Naive thymus-derived CD8-positive, alpha-beta T cell (primary cell): ENCODE measurements at regions of chr10 and their contacts with region 1.

Region 1: GRCh38 chr10:92240289-92241157 is 50.4 kb downstream of the CPEB3 start:
- DNase-seq: peak in 6 of 10 donors; percentile 23 to 44 (median 38)
- ATAC-seq: peak; percentile 30 to 41
- H3K4me3 Mint-ChIP-seq: peak overlapping the region; percentile 88 to 96 (median 92)
- H3K27ac Mint-ChIP-seq: peak overlapping the region; percentile 42 to 91 (median 84)
- H3K4me1 Mint-ChIP-seq: peaks cover 21 to 50% (median 34%) of the 10 kb centered on the region in 4 donors
- H3K27me3 Mint-ChIP-seq: no peaks in the 10 kb centered on the region

Region 2: DNA sequence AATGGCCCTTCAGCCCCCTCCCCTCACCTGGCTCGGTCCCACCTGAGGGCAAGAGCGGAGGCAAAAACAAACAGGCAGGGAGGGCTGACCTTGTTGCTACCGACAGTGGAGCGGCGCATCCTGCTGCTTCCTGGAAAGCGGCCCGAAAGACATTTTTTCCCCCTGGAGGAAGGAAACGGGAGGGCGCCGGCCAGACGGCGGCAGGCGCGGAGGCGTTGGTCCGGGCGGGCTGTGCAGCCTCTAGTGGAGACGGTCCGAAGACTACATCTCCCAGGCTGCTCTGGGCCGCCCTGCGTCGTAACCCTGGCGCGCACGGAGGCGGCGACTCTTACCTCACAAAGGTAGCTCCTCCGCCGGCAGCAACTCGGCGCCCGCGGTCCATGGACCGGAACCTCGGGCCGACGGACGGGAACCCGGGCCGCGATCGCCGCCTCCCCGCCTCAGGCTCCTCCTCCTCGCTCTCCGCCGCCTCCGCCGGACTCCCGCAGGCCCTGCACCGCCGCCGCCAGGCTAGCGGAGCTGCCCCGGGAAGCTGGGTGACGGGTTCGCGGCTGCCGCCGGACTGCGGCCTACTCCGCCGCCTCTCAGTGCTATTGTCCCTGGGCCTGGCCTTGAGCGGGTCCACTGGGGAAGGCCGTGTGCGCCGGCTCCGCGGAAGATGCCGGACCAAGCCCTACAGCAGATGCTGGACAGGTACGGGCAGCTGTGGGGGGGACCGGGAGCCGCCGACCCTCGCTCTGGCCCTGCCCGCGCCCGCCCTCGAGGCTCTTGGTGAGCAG is 50.5 kb after region 1 on chr10 and contains the starts of genes CPEB3 and MARCHF5:
- POLR2A ChIA-PET with region 1: interaction called, 10 read pairs
- DNase-seq: peak; percentile 78 to 94 (median 87)
- ATAC-seq: peak; percentile 96 to 97
- H3K4me3 Mint-ChIP-seq: peak within 1 kb of the TSS; percentile 93 to 97 (median 96)
- H3K27ac Mint-ChIP-seq: peak within 1 kb of the TSS; percentile 63 to 96 (median 92)
- H3K4me1 Mint-ChIP-seq: peaks cover 18 to 35% (median 31%) of the 10 kb centered on the region in 4 donors
- H3K27me3 Mint-ChIP-seq: no peaks in the 10 kb centered on the region
- polyA plus RNA-seq, gene CPEB3: 0.92 to 1.4 (median 1.2) TPM
- polyA plus RNA-seq, gene MARCHF5: 21.0 to 24.0 (median 23.4) TPM